ENCODE measurements at regions of chr17 and their contacts with region 1.

Region 1: GRCh38 chr17:44636562-44636961 is 19.7 kb upstream of the MEIOC start:
- DNase-seq: no peak
- H3K4me3 ChIP-seq: no peak overlapping the region
- H3K27ac ChIP-seq: no peak overlapping the region
- H3K4me1 ChIP-seq: no peaks in the 10 kb centered on the region
- H3K27me3 ChIP-seq: no peaks in the 10 kb centered on the region
- CTCF ChIP-seq: peak; percentile 22 to 82 (median 69)
- POLR2A ChIP-seq: no peak

Region 2: DNA sequence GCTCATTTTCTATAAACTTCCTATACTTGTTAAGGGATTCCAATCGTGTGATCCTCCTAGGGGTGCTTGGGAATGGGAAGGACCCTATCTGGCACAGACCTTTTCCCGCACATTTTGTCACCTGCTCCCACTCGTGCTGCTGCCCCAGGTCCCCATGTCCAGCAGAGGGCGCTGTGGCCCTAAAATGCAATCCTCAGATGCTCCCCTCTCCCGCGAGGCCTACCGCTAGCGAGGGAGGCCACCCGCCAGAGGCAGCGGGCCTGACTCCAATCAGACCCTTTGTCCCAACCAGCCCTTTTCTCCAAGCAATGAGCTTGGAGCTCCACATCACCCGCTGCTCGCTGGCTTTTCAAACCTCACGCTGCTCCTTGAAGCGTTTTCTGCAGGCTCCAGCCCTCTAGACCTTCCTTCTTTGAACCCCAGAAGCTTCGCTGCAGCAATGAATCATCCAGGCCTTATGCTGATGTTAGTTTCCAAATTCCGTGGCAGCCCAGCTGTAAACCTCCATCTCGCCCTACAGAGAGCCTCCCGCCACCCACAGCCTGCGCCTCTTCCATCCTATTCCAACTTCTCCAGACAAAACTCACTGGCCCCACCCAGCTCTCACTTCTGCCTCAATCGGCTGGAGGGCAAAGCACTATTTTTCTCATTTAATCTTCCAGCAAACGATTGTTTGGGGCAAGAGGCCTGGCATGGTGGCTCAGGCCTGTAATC is 102.9 kb before region 1 on chr17:
- intact Hi-C with region 1: loop called (anchors 2 to 5 kb)
- DNase-seq: peak; percentile 81 to 95 (median 90)
- H3K4me3 ChIP-seq: no peak overlapping the region
- H3K27ac ChIP-seq: peak overlapping the region in 2 of 5 donors; percentile 17 to 58
- H3K4me1 ChIP-seq: peaks cover 3 to 5% of the 10 kb centered on the region in 2 donors
- H3K27me3 ChIP-seq: peaks cover 4% of the 10 kb centered on the region
- CTCF ChIP-seq: peak; percentile 94 to 98 (median 96)
- POLR2A ChIP-seq: no peak

Region 3: GRCh38 chr17:44543213-44543904 is 93.2 kb before region 1 on chr17:
- intact Hi-C with region 1: loop called in 1 of 2 experiments (anchors 5 kb)
- DNase-seq: no peak
- H3K4me3 ChIP-seq: no peak overlapping the region
- H3K27ac ChIP-seq: peak overlapping the region in 1 of 5 donors; percentile 40
- H3K4me1 ChIP-seq: no peaks in the 10 kb centered on the region
- H3K27me3 ChIP-seq: peaks cover 8% of the 10 kb centered on the region
- CTCF ChIP-seq: no peak
- POLR2A ChIP-seq: no peak

Region 4: GRCh38 chr17:44672479-44673093 is 36.0 kb after region 1 on chr17:
- intact Hi-C with region 1: no loop called
- DNase-seq: no peak
- H3K4me3 ChIP-seq: no peak overlapping the region
- H3K27ac ChIP-seq: no peak overlapping the region
- H3K4me1 ChIP-seq: no peaks in the 10 kb centered on the region
- H3K27me3 ChIP-seq: no peaks in the 10 kb centered on the region
- CTCF ChIP-seq: peak; percentile 30 to 57 (median 36)
- POLR2A ChIP-seq: no peak